ENCODE measurements at regions of chr1 and their contacts with region 1.

Region 1: DNA sequence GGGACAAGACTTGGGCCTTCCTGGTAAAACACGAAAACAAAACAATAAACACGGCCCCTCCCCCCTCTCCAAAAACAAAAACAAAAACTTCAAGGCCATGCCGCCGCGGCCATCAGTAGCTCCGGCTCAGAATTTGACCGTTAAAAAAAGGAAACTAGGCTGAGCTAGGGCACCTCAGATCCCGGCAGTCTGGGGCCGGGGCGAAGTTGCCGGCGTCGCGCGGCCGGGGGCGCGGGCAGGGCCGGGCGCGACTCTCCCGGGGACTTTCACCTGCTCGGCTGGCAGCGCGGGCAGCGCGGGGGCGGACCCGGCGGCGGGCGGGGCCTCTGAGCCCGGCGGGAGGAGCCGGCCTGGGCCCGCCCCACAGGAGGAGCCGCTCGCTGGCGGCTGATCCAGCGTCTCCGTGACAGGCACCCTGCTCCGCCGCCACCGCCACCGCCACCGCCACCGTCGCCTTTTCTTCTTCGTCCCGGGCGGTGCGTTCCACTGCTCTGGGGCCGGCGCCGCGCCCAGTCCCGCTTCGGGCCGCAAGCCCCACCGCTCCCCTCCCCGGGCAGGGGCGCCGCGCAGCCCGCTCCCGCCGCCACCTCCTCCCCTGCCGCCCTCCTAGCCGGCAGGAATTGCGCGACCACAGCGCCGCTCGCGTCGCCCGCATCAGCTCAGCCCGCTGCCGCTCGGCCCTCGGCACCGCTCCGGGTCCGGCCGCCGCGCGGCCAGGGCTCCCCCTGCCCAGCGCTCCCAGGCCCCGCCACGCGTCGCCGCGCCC is at the start of gene NOS1AP:
- DNase-seq: peak in 1 of 2 donors; percentile 89
- H3K4me3 ChIP-seq: peak within 1 kb of the TSS; percentile 85 to 96
- H3K27ac ChIP-seq: peak within 1 kb of the TSS in 1 of 2 donors; percentile 66
- H3K4me1 ChIP-seq: peaks cover 0 to 11% of the 10 kb centered on the region in 2 donors
- H3K27me3 ChIP-seq: no peaks in the 10 kb centered on the region
- CTCF ChIP-seq: no peak
- total RNA-seq, gene NOS1AP: 5.0 TPM

Region 2: GRCh38 chr1:160307118-160307854 is 1762.2 kb before region 1 on chr1:
- intact Hi-C with region 1: no loop called
- DNase-seq: no peak
- H3K4me3 ChIP-seq: no peak overlapping the region
- H3K27ac ChIP-seq: no peak overlapping the region
- H3K4me1 ChIP-seq: no peaks in the 10 kb centered on the region
- H3K27me3 ChIP-seq: no peaks in the 10 kb centered on the region
- CTCF ChIP-seq: no peak

Region 3: GRCh38 chr1:162213281-162213912 is 143.9 kb after region 1 on chr1:
- intact Hi-C with region 1: loop called (anchors 5 kb)
- DNase-seq: peak in 1 of 2 donors; percentile 83
- H3K4me3 ChIP-seq: no peak overlapping the region
- H3K27ac ChIP-seq: peak overlapping the region; percentile 30 to 55
- H3K4me1 ChIP-seq: peaks cover 0 to 31% of the 10 kb centered on the region in 2 donors
- H3K27me3 ChIP-seq: no peaks in the 10 kb centered on the region
- CTCF ChIP-seq: no peak

Measured in ascending aorta (tissue), 2 donors.